K562 (cell line): ENCODE measurements at regions of chr21 and their contacts with region 1.

Region 1: DNA sequence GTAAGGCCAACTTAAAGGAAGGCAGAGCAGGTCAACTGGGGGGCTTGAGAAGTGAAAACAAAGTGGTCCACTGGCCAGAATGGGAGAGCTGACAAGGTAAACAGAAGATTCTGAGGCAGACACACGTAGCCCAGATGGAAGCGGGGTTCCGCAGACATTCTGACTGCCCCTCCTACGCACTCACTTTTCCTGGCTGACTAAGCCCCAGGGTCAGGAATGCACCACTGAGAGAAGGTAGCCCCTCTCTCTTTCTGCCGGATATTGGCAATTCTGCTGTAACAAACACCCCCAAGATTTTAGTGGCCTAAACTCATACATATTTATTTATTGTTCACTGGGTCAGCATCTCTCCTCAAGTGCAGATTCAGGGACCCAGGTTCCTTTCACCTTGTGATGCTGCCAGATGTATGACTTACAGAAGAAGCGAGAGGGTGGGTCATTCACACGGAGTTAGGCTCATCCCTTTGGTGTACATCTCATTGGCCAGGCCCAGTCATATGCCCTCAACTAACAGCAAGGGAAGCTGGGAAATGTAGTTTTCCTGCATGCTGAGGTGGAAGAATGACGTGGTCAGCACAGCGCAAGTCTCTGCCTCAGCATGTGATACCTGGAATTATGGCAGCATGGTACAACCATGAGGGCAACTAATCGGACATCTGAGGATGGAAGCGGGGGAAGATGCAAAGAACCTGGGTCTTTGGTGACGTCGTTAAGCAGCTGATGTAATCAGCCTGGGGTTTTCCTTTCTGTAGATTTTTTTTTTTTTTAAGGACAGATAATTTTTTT is 43.4 kb upstream of the MRPS6 start:
- DNase-seq: peak; percentile 84 to 89 (median 85)
- ATAC-seq: peak; percentile 99
- H3K4me3 ChIP-seq: no peak overlapping the region
- H3K27ac ChIP-seq: no peak overlapping the region; the same call in 1 of the 3 replicates
- H3K4me1 ChIP-seq: peaks cover 0 to 14% of the 10 kb centered on the region in 2 experiments; a peak in 3 of 5 replicates
- H3K27me3 ChIP-seq: no peaks in the 10 kb centered on the region
- CTCF ChIP-seq: no peak
- EP300 ChIP-seq: no peak
- POLR2A ChIP-seq: no peak
- RAD21 ChIP-seq: 0 out of 4 replicates have a peak, but pooled peaks of 1 of the 2 experiments have one; percentile 1

Region 2: GRCh38 chr21:33894736-33895288 is 135.1 kb before region 1 on chr21:
- CTCF ChIA-PET with region 1: no interaction called
- POLR2A ChIA-PET with region 1: no interaction called
- in situ Hi-C with region 1: no loop called
- intact Hi-C with region 1: no loop called
- DNase-seq: peak; percentile 84 to 92 (median 86)
- ATAC-seq: peak; percentile 97
- H3K4me3 ChIP-seq: no peak overlapping the region
- H3K27ac ChIP-seq: no peak overlapping the region
- H3K4me1 ChIP-seq: peaks cover 2 to 12% of the 10 kb centered on the region in 2 experiments; a peak in 4 of 5 replicates
- H3K27me3 ChIP-seq: peaks cover 10 to 15% of the 10 kb centered on the region in 2 experiments; a peak in 4 of 5 replicates
- CTCF ChIP-seq: peak; percentile 88 to 92 (median 92)
- EP300 ChIP-seq: no peak
- POLR2A ChIP-seq: no peak
- RAD21 ChIP-seq: peak; percentile 86 to 92

Region 3: DNA sequence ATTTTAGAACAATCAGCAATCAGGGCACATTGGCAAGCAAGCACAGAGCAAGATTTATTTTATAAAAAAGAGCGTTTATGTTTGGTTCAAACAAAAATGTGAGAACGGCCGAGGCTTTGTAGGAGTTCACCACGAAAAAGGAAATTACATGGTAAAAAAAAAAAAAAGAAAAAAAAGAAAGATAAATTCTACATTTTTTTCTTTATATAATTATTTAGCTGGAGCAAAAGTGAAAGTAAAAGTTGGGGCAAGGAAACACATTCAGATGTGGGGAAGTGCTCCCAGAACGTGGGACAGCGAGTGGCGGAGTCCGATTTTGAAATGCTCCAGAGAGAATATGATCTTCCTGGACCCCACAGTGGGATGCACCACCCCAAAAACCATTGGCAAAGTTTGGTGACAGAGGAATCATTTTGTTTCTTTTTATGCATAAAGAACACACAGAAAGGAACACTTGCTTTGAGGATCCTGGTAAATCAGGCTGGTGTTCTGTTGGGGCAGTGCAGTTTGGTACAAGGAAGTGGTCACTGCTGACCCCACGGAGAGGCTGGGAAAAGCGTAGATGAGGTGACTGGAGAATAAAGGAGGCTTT is 98.0 kb before region 1 on chr21:
- CTCF ChIA-PET with region 1: no interaction called
- POLR2A ChIA-PET with region 1: no interaction called
- in situ Hi-C with region 1: no loop called
- intact Hi-C with region 1: loop called (anchors 5 kb)
- DNase-seq: peak in 2 of 4 experiments; percentile 43 to 44
- ATAC-seq: peak; percentile 84
- H3K4me3 ChIP-seq: peak overlapping the region; percentile 67
- H3K27ac ChIP-seq: peak overlapping the region; percentile 92
- H3K4me1 ChIP-seq: peaks cover 0 to 6% of the 10 kb centered on the region in 2 experiments; a peak in 1 of 5 replicates
- H3K27me3 ChIP-seq: no peaks in the 10 kb centered on the region
- CTCF ChIP-seq: no peak
- EP300 ChIP-seq: no peak
- POLR2A ChIP-seq: no peak
- RAD21 ChIP-seq: no peak